AG04450 (cell line): ENCODE measurements at regions of chr1 and their contacts with region 1.

Region 1: GRCh38 chr1:226201029-226201593 is 14.6 kb upstream of the ACBD3 start:
- DNase-seq: no peak
- H3K4me3 ChIP-seq: no peak overlapping the region
- H3K27ac ChIP-seq: no peak overlapping the region
- H3K27me3 ChIP-seq: peaks cover 6% of the 10 kb centered on the region
- CTCF ChIP-seq: peak; percentile 53

Region 2: GRCh38 chr1:225766967-225767633 is 434.0 kb before region 1 on chr1:
- CTCF ChIA-PET with region 1: no interaction called
- POLR2A ChIA-PET with region 1: no interaction called
- DNase-seq: peak; percentile 74
- H3K4me3 ChIP-seq: 0 out of 2 replicates have a peak overlapping the region, but pooled peaks have one; percentile 4
- H3K27ac ChIP-seq: peak overlapping the region; percentile 89
- H3K27me3 ChIP-seq: no peaks in the 10 kb centered on the region
- CTCF ChIP-seq: no peak

Region 3: GRCh38 chr1:226186124-226187018 is 14.7 kb before region 1 on chr1 and contains the start of gene ACBD3:
- CTCF ChIA-PET with region 1: interaction called, 16 read pairs
- POLR2A ChIA-PET with region 1: no interaction called
- DNase-seq: peak; percentile 55
- H3K4me3 ChIP-seq: peak within 1 kb of the TSS; percentile 97
- H3K27ac ChIP-seq: peak within 1 kb of the TSS; percentile 65
- H3K27me3 ChIP-seq: no peaks in the 10 kb centered on the region
- CTCF ChIP-seq: no peak; the same call in 1 of the 2 replicates
- polyA plus RNA-seq, gene ACBD3: 49.6 and 63.0 TPM in 2 replicates

Region 4: DNA sequence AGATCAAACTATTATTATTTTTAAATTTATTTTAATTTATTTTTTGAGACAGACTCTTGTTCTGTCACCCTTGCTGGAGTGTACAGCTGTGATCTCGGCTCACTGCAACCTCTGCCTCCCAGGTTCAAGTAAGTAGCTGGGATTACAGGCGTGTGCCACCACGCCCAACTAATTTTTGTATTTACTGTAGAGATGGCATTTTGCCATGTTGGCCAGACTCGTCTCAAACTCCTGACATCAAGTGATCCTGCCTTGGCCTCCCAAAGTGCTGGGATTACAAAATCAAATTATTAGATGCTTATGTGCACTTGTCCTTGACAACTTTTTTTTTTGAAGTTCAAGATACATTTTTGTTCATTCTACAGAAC is 92.4 kb after region 1 on chr1:
- CTCF ChIA-PET with region 1: no interaction called
- POLR2A ChIA-PET with region 1: no interaction called
- DNase-seq: no peak
- H3K4me3 ChIP-seq: no peak overlapping the region
- H3K27ac ChIP-seq: no peak overlapping the region
- H3K27me3 ChIP-seq: no peaks in the 10 kb centered on the region
- CTCF ChIP-seq: no peak

Region 5: DNA sequence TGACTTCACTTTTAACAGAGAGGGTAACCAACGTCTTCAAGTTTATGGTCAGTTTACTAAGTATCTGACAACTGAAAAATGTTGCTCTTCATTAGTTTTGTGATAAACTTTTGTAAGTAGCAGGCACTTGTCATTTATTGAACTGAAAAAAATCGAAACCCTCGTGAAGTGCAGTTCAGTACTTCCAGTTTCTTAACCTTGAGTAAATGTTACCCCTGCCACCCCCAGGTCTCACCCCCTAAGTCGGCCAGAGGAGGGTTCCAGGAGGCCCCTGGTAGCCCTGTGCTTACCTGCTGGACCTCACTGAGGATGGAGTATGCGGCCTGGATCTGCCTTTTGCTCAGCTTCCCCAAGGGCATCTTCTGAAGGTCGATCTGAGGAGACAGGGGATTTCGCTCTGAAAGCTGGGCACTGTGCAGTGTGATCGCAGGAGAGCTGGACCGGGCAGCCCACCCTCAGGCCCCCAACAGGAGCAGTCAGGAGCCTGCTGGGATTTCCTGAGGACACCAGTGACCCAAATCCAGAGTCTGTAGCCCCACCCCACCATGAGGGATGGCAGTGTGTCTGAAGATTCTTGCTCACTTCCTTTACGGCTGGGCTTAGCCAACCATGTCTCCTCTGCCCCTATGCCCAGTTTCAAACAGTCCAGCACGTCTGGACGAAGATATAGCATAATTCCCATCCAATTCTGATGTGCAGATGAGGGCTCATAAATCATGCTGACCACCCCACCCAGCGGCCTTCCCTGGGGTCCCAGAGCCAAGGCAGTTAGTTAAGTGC is 169.2 kb after region 1 on chr1:
- CTCF ChIA-PET with region 1: no interaction called
- POLR2A ChIA-PET with region 1: no interaction called
- DNase-seq: no peak
- H3K4me3 ChIP-seq: no peak overlapping the region
- H3K27ac ChIP-seq: no peak overlapping the region
- H3K27me3 ChIP-seq: no peaks in the 10 kb centered on the region
- CTCF ChIP-seq: no peak